ENCODE measurements at regions of chr17 and their contacts with region 1.

Region 1: GRCh38 chr17:68468334-68468733 is 11.0 kb upstream of the WIPI1 start:
- DNase-seq: no peak
- CTCF ChIP-seq: no peak

Region 2: DNA sequence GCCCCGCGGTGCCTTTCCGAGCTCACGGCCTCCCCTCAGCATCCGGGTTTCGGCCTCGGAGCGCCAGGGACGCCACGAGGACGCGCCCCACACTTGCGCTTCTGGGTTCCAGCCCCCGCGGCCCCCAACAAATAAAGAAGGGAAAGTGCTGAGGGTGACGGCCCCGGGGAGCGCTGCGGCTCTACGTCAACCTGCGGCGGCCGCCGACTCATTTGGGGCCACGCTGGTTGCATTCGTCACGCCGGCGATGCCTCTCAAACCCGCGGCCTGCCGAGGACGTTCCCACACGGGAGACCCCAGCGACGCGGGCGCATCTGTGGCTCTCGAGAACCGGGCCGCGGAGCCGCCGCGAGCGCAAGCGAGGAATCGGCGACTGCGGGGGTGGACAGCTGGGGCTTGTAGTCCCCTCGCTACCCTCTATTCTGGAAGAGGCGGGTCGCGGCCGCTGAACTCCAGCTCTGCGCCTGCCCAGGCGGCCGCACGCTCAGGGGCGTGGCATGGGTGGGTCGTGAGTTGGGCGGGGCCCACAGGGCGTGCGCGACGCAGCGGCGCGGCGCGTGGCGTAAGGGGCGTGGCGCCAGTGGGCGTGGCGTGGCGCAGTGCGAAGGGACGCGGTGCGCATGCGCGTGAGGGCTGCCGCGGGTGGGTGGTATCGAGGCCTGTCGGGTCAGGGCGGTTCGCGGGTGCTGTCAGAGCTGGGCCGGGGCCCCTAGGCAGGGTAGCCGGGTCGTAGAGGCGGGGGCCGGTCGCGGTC is 220.7 kb before region 1 on chr17 and contains the start of gene AMZ2:
- CTCF ChIA-PET with region 1: interaction called, 10 read pairs
- POLR2A ChIA-PET with region 1: no interaction called
- DNase-seq: peak; percentile 95
- CTCF ChIP-seq: no peak

Region 3: GRCh38 chr17:68428498-68429170 is 39.7 kb before region 1 on chr17:
- CTCF ChIA-PET with region 1: no interaction called
- POLR2A ChIA-PET with region 1: no interaction called
- DNase-seq: no peak
- CTCF ChIP-seq: no peak

Region 4: GRCh38 chr17:68457539-68458259 is 10.6 kb before region 1 on chr17:
- CTCF ChIA-PET with region 1: interaction called, 11 read pairs
- POLR2A ChIA-PET with region 1: no interaction called
- DNase-seq: peak; percentile 98
- CTCF ChIP-seq: no peak

Region 5: DNA sequence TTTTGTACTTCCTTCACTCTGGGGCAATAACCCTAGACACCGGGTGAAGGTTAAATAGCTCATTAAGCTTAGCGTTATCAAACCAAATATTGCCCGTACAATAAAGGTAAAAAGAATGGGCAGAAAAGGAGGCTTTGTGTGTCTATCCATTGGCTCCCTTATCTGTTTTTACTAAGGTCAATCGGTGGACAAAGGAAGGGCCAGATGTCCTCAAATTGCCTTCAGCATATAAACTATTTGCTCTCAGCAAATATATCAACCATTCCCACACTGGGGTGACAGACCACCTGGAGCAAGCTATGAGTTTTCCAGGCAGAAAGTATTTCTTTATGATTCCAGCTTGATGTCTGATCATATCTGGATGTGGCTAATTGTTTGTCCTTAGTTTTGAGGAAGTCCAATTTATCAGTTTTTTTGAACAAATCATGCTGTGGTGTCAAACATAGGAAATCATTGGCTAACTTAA is 14.3 kb after region 1 on chr17:
- CTCF ChIA-PET with region 1: interaction called, 17 read pairs
- POLR2A ChIA-PET with region 1: no interaction called
- DNase-seq: no peak
- CTCF ChIP-seq: no peak

Region 6: DNA sequence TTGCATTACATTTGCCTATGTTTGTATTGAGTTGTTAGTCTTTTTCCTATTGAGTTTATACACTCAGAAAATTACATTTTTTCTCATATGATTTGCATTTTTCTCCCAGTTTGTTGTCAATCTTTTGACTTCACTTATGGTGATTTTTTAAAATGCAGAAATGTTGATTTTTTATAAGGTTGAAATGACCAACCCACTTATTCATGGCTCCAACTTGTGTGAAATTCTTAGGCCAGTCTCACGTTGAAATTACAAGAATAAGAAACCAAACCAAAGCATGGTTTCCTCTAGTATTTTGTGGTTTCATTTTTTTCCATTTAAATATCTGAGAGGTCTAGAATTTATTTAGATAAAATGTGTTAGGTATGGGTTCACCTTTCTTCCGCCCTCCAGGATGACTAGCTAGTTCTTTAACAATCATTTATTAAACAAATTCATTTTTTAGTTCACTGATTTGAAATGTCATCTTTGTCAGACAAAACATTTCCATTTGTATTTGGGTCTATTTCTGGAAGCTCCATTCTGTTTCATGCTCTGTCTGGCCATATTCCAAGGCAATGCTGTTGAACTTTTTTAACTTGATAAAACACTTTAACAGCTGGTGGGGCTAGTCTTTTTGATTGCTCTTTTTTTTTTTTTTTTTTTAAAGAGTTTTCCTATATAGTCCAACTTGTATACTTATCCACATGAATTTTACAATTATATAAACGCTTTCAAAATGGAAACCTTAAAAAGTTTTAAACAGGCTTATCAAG is 92.8 kb after region 1 on chr17:
- CTCF ChIA-PET with region 1: no interaction called
- POLR2A ChIA-PET with region 1: no interaction called
- DNase-seq: no peak
- CTCF ChIP-seq: no peak

Measured in GM10248 (cell line).